Psoas muscle (tissue), 8 donors: ENCODE measurements at regions of chr4 and their contacts with region 1.

Region 1: DNA sequence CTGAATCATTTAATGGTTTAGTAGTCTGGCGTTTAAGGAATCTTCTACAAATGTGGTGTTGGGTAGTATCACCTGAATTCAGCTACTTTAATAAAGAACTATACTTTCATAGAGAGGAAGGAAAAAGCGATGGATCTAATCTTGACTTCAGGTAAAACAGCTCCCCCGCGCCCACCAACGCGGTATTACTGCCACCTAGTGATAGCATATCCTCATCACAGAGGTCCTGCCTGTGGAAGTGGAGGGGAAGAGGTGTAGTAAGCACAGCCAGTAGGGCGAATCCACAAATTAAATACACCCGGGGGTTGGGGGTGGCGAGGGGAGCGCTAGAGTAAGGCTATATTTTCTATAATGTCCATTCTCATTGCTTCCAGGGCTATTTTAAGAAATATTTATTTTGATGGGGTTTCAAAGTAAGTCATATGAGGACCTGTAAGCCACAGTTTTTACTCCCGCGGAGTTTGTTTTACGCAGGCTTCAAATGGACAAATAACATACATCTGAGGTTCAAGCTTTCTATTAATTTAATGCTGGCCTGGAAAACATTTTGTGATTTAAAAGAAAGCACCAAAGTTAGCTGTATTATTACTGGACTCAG is 8.3 kb upstream of the DAPP1 start:
- DNase-seq: peak; percentile 47 to 71
- ATAC-seq: peak; percentile 88 to 96 (median 92)
- H3K4me3 ChIP-seq: no peak overlapping the region
- H3K27ac ChIP-seq: peak overlapping the region; percentile 69
- H3K4me1 ChIP-seq: peaks cover 31% of the 10 kb centered on the region
- H3K27me3 ChIP-seq: no peaks in the 10 kb centered on the region
- CTCF ChIP-seq: peak; percentile 84

Region 2: GRCh38 chr4:99655308-99656081 is 152.9 kb before region 1 on chr4:
- intact Hi-C with region 1: loop called (anchors 2 to 5 kb)
- DNase-seq: peak in 1 of 2 donors; percentile 83
- ATAC-seq: peak; percentile 28 to 54 (median 51)
- H3K4me3 ChIP-seq: peak overlapping the region; percentile 78
- H3K27ac ChIP-seq: peak overlapping the region; percentile 99
- H3K4me1 ChIP-seq: peaks cover 30% of the 10 kb centered on the region
- H3K27me3 ChIP-seq: no peaks in the 10 kb centered on the region
- CTCF ChIP-seq: no peak

Region 3: DNA sequence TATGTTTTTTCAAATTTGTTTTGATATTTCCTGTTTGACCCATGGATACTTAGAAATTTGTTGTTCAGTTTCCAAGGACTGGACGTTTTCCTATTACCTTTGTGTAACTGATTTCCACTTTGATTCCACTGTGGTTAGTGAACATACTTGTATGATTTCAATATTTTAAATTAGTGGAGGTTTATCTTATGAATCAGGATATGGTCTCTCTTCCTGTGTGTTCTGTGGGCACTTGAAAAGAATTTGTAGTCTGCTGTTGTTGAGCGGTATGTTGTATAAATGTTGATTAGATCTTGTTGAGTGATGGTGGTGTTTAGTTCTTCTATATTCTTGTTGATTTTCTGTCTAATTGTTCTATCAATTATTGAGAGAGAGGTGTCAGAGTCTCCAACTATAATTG is 107.1 kb after region 1 on chr4:
- intact Hi-C with region 1: no loop called
- DNase-seq: no peak
- ATAC-seq: no peak
- H3K4me3 ChIP-seq: no peak overlapping the region
- H3K27ac ChIP-seq: no peak overlapping the region
- H3K4me1 ChIP-seq: no peaks in the 10 kb centered on the region
- H3K27me3 ChIP-seq: no peaks in the 10 kb centered on the region
- CTCF ChIP-seq: no peak